ENCODE measurements at regions of chr11 and their contacts with region 1.

Region 1: DNA sequence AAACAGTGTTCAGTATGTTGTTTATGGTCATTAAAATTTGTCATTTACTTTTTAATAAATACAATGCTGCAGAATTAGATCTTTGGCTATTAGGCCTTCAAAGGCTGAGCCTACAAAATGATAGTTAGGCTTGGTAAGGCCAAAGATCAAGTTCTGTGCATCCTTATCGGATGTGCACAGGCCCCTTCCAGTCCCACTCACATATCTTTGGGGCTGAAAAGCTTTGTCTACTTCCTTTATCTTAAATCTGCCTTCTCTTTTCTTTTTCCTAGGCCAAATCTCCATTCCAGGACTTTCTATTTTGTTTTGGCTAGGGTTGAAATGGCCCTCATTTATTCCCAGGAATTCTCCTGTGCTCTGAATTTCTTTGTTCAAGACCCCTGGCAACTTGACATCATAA is 3.4 kb upstream of the GLB1L2 start:
- DNase-seq: no peak
- H3K4me3 ChIP-seq: no peak overlapping the region
- H3K27ac ChIP-seq: no peak overlapping the region
- H3K4me1 ChIP-seq: no peaks in the 10 kb centered on the region
- H3K27me3 ChIP-seq: no peaks in the 10 kb centered on the region
- CTCF ChIP-seq: no peak

Region 2: DNA sequence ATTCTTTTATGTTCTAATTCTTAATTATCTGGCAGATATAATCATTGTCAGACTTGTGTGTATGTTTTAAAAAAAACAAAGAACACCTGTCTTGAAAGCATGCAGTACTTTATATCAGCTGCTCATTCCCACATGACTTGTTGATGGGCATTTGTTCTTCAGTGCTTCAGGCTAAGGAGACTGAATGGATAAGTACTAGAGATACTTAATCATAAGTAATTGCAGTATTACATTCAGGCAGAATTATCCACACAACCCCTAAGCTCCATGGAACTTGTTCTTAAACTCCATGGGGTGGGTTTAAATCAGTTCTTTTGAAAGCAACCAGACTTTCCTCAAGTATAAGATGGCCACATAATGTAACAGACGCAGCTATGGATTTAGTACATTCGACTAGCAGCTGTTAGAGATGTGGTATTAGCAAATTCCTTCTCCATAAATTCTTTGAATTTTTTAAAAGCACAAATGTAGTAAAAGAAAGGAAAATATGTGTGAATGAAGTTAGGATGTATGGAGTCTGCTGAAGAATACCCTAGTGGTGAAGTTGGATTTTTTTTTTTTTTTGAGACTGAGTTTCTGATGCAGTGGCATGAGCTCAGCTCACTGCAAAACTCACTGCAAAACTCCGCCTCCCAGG is 256.5 kb before region 1 on chr11:
- intact Hi-C with region 1: no loop called
- DNase-seq: no peak
- H3K4me3 ChIP-seq: no peak overlapping the region
- H3K27ac ChIP-seq: no peak overlapping the region
- H3K4me1 ChIP-seq: no peaks in the 10 kb centered on the region
- H3K27me3 ChIP-seq: peaks cover 19% of the 10 kb centered on the region
- CTCF ChIP-seq: no peak

Region 3: DNA sequence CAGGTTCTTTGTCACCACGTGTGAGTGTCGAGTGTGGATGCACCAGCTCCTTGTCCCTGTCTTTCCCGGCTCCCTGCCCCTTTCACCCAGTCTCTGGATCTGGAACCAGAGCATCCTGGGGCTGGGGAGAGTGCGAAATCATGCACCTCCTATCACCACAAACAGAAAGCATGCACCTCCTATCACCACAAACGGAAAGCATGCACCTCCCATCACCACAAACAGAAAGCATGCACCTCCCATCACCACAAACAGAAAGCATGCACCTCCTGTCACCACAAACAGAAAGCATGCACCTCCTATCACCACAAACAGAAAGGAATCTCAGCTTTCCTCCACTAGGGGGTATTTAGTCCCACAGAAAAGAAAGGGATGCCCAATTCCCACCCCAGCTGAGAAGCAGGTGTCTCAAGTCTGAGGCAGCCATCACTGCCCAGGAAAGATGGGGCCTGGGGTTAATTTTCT is 58.2 kb before region 1 on chr11:
- intact Hi-C with region 1: loop called (anchors 5 kb)
- DNase-seq: no peak
- H3K4me3 ChIP-seq: no peak overlapping the region
- H3K27ac ChIP-seq: no peak overlapping the region
- H3K4me1 ChIP-seq: no peaks in the 10 kb centered on the region
- H3K27me3 ChIP-seq: peaks cover 30% of the 10 kb centered on the region
- CTCF ChIP-seq: no peak

Region 4: DNA sequence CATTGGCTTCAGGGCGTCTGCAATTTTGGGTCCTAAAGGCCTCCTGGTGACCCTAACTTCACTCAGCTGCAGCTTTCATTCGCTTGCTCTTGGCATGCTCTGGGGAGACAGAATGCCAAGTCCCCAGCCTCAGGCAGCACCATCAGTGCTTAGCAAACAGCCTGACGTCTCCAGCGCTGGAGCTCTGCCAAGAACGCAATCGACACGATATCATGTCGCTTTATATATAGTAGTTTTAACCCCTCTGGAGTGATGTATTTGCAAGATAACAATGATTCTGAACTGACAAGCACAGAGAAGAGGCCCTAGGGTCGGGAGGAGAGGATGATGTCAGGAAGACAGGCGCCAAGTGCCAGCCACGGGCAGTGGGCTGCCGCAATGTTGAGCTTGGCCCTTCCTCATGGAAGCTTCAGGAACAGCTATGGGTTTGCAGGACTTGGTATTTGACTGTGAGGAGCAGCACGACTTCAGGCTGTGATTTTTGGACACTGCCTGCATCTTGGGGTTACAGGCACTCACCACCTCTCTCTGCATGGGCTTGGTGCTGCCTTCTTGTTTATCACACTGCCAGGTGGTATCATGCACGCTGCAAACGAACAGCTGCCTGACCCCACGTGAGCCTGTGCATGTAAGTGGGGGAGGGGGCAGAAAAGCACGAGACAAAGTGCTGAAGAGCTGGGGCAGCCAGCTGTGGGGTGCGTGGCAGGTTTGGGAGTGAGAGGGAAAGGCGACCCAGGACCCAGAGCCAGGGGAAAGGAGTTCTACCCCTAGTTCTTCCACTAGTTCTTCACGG is 57.5 kb after region 1 on chr11:
- intact Hi-C with region 1: no loop called
- DNase-seq: no peak
- H3K4me3 ChIP-seq: no peak overlapping the region
- H3K27ac ChIP-seq: no peak overlapping the region
- H3K4me1 ChIP-seq: no peaks in the 10 kb centered on the region
- H3K27me3 ChIP-seq: no peaks in the 10 kb centered on the region
- CTCF ChIP-seq: no peak

Measured in colonic mucosa (tissue), 4 donors.